ENCODE measurements at regions of chr11 and their contacts with region 1.

Region 1: GRCh38 chr11:35015621-35016387 is 99.4 kb downstream of the PDHX start:
- DNase-seq: no peak
- H3K4me3 ChIP-seq: no peak overlapping the region
- H3K27ac ChIP-seq: no peak overlapping the region
- H3K4me1 ChIP-seq: no peaks in the 10 kb centered on the region
- CTCF ChIP-seq: no peak

Region 2: DNA sequence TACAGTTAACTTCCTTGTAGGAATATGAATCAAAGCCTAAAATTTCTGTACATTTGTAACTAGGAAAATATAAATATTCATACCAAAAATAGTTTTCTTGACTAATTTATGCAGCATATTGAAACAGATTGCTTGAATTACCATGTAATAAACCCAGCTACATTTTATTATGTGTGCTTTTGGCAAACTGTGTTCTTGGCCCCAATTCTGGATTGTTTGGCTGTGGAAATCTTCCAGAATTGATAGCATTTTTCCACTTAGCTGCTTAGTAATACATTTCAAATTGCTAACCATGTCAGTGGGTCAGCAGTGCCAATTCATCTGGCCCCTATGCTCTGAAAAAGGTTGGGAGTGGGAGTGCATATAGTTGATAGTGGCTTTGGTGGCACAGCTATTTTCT is 67.1 kb before region 1 on chr11:
- CTCF ChIA-PET with region 1: no interaction called
- POLR2A ChIA-PET with region 1: no interaction called
- intact Hi-C with region 1: no loop called
- DNase-seq: no peak
- H3K4me3 ChIP-seq: no peak overlapping the region
- H3K27ac ChIP-seq: no peak overlapping the region
- H3K4me1 ChIP-seq: no peaks in the 10 kb centered on the region
- CTCF ChIP-seq: no peak

Region 3: GRCh38 chr11:35073691-35074419 is 58.1 kb after region 1 on chr11:
- CTCF ChIA-PET with region 1: no interaction called
- POLR2A ChIA-PET with region 1: no interaction called
- intact Hi-C with region 1: no loop called
- DNase-seq: no peak
- H3K4me3 ChIP-seq: no peak overlapping the region
- H3K27ac ChIP-seq: no peak overlapping the region
- H3K4me1 ChIP-seq: peaks cover 31% of the 10 kb centered on the region
- CTCF ChIP-seq: no peak

Region 4: DNA sequence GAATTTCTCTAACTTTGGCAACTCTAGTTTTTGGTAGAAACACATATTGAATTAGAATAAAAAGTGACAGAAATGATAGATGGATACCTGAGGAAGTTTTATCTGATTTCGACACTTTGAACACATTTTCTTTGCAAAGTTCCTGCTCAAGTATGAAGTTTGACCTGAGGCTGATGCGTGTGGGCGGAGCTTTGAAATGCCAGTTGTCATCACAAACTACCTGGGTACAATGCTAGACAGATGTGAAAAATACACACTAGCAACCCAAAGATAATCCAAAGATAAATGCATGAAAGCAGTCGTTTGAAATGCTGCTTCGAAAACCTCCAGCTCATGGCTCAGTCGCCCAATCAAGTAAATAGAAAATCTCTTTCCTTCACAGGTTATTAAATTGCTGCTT is 178.0 kb after region 1 on chr11:
- CTCF ChIA-PET with region 1: no interaction called
- POLR2A ChIA-PET with region 1: interaction called, 12 read pairs
- intact Hi-C with region 1: no loop called
- DNase-seq: no peak
- H3K4me3 ChIP-seq: no peak overlapping the region
- H3K27ac ChIP-seq: no peak overlapping the region
- H3K4me1 ChIP-seq: no peaks in the 10 kb centered on the region
- CTCF ChIP-seq: no peak